ENCODE measurements at regions of chr3 and their contacts with region 1.

Region 1: DNA sequence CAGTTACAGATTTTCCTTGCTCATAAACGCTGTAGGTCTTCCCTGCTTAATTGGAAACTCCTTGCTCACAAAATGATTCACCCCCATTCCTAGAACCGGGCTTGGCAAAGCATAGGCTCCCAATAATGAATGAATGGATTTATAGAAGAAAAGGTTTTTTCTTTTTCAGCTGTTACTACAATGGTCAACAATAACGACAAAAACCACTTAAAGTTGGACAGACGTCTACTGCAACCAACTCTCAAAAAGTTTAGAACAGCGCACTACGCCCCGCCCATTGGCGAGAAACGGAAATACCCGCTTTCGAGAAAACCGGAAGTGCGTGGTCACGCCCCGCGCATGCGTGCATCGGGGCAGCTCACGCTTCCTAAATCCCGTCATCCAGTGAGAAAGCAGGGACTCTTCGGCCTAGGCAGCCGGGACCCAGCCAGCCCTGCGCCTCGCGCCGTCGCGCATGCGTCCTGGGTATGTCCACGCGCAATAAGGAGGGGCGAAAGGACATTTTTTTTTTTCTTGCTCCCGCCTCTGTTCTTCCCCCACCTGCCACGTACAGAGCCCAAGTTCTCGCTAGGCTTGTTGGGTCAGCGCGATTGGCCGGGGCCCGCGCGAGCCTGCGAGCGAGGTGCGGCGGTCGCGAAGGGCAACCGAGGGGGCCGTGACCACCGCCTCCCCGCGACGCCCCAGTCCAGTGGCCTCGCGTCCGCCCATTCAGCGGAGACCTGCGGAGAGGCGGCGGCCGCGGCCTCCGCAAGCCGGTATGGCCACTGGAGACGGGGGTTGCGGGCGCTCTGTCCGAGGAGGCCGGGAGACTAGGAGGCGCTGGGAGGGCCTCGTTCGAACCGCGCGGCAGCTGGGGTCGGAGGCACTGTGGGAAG is at the start of gene TFG:
- DNase-seq: peak; percentile 100
- H3K4me3 Mint-ChIP-seq: peak within 1 kb of the TSS; percentile 88
- H3K27ac Mint-ChIP-seq: peak within 1 kb of the TSS; percentile 94
- H3K4me1 Mint-ChIP-seq: peaks cover 33% of the 10 kb centered on the region
- H3K27me3 Mint-ChIP-seq: no peaks in the 10 kb centered on the region
- total RNA-seq, gene TFG: 71.5 and 72.2 TPM in 2 replicates

Region 2: DNA sequence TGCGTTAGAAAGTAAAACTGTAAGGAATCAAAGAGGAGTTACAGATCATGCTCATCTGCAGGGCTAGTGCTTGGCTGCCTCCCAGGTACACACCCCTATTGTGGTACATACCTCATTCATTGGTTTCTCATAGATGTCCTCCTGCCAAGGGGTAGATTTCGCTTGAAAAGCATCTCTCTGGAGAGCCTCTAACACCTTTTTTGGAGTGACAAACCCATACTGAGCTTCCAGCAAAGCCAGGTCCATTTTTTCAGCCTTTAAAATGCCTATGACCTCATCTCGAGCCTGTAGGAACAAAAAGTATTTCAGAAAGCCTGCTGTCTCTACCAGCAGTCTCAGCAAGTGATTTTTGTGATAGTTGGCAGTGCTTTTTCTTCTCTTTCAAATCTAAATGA is 779.5 kb before region 1 on chr3:
- intact Hi-C with region 1: no loop called
- DNase-seq: no peak
- H3K4me3 Mint-ChIP-seq: no peak overlapping the region
- H3K27ac Mint-ChIP-seq: no peak overlapping the region
- H3K4me1 Mint-ChIP-seq: no peaks in the 10 kb centered on the region
- H3K27me3 Mint-ChIP-seq: no peaks in the 10 kb centered on the region

Region 3: DNA sequence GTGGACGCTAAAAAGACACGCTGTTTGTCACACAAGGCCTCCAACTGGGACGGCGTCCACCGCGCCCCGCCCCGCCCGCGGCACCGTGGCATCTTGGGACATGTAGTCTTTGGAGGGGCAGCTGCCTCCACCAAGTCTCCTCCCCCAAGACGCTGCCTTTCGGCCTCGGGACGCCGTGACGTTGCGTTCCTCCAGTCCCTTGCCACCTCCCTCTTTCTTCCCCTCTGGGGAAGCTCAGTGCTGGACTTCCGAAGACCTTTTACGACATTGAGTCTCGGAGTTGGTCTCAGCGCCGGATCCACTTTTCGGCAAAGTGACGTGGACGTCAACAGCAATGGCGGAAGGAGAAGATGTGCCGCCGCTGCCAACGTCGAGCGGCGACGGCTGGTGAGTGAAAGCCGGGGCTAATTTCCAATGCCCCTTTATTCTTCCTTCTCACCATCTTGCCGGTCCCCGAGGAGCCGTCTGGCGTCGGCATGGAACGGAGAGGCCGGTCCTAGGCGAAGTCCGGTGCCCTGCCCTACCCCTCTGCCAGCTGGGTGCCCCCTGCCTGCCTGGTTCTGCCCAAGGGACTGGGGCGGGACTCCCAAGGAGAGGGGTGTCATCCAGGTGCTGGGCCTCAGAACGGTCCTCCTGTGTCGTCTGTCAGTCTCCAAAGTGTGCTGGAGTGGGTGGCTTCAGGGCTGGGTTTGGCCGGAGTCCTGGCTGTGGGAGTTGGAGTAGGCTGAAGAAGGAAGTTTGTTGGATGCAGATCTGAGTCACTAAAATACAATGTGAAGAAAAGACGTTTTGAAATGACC is 448.3 kb before region 1 on chr3 and contains the start of gene TBC1D23:
- intact Hi-C with region 1: loop called (anchors 10 kb)
- DNase-seq: peak; percentile 99
- H3K4me3 Mint-ChIP-seq: peak within 1 kb of the TSS; percentile 98
- H3K27ac Mint-ChIP-seq: peak within 1 kb of the TSS; percentile 96
- H3K4me1 Mint-ChIP-seq: peaks cover 33% of the 10 kb centered on the region
- H3K27me3 Mint-ChIP-seq: no peaks in the 10 kb centered on the region
- total RNA-seq, gene TBC1D23: 17.6 and 19.4 TPM in 2 replicates

Region 4: GRCh38 chr3:100334488-100335351 is 374.5 kb before region 1 on chr3 and contains the start of gene NIT2:
- intact Hi-C with region 1: loop called (anchors 2 kb)
- DNase-seq: peak; percentile 93
- H3K4me3 Mint-ChIP-seq: peak within 1 kb of the TSS; percentile 95
- H3K27ac Mint-ChIP-seq: peak within 1 kb of the TSS; percentile 98
- H3K4me1 Mint-ChIP-seq: peaks cover 18% of the 10 kb centered on the region
- H3K27me3 Mint-ChIP-seq: no peaks in the 10 kb centered on the region
- total RNA-seq, gene NIT2: 75.5 and 79.2 TPM in 2 replicates

Region 5: GRCh38 chr3:100480111-100480510 is 229.1 kb before region 1 on chr3:
- intact Hi-C with region 1: no loop called
- DNase-seq: no peak
- H3K4me3 Mint-ChIP-seq: no peak overlapping the region
- H3K27ac Mint-ChIP-seq: no peak overlapping the region
- H3K4me1 Mint-ChIP-seq: peaks cover 4% of the 10 kb centered on the region
- H3K27me3 Mint-ChIP-seq: peaks cover 14% of the 10 kb centered on the region

Region 6: GRCh38 chr3:100650651-100651611 is 58.3 kb before region 1 on chr3:
- intact Hi-C with region 1: loop called (anchors 1 kb)
- DNase-seq: peak; percentile 73
- H3K4me3 Mint-ChIP-seq: peak overlapping the region; percentile 58
- H3K27ac Mint-ChIP-seq: peak overlapping the region; percentile 75
- H3K4me1 Mint-ChIP-seq: peaks cover 12% of the 10 kb centered on the region
- H3K27me3 Mint-ChIP-seq: peaks cover 2% of the 10 kb centered on the region

Region 7: GRCh38 chr3:100725935-100726513 is 16.8 kb after region 1 on chr3:
- intact Hi-C with region 1: loop called (anchors 2 kb)
- DNase-seq: no peak
- H3K4me3 Mint-ChIP-seq: no peak overlapping the region
- H3K27ac Mint-ChIP-seq: no peak overlapping the region
- H3K4me1 Mint-ChIP-seq: peaks cover 25% of the 10 kb centered on the region
- H3K27me3 Mint-ChIP-seq: no peaks in the 10 kb centered on the region

Region 8: GRCh38 chr3:101573449-101574387 is 864.5 kb after region 1 on chr3 and contains the start of gene PCNP:
- intact Hi-C with region 1: loop called (anchors 5 kb)
- DNase-seq: peak; percentile 100
- H3K4me3 Mint-ChIP-seq: peak within 1 kb of the TSS; percentile 94
- H3K27ac Mint-ChIP-seq: peak within 1 kb of the TSS; percentile 95
- H3K4me1 Mint-ChIP-seq: peaks cover 46% of the 10 kb centered on the region
- H3K27me3 Mint-ChIP-seq: no peaks in the 10 kb centered on the region
- total RNA-seq, gene PCNP: 190 and 205 TPM in 2 replicates